ENCODE measurements at regions of chr2 and their contacts with region 1.

Region 1: DNA sequence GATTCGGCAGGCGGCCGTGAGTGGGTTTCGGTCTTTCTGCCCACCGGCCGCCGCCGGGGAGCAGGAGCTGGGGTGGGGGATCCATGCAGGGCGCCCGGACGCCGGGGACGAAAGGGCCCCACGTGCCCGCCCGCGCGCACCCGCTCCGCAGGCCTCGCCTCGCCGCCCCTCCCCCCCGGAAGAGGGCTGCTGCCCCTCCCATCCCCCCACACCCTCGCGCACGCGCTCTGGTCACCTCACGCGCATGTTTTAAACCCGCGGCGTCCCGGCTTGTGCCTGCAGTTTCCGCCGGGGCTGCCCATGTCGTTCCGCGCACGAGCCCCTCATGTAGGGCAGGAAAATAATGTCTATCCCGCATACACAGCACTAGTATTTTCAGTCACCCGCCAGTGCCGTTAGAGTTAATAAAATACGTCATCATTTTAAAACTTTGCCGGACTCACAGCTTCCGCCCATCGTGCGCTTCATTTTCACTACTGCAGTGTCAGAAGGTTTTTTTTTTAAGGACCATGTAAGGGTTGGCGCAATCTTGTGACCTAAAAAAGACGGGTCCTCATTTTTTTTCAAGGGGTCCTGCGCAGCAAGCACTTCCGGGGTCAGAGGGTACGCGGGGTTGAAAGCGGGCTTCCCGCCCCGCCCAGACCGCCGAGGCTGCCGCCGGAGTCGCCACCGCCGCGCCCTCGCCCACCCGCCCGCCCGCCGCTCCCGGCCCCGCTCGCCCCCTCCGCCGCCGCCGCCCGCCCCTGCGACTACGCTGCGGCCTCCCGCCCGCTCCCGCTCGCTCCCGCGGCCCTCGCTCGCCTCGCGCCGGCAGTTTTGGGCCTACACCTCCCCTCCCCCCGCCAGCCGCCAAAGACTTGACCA is at the start of gene PCBP1:
- DNase-seq: peak; percentile 98
- H3K4me3 Mint-ChIP-seq: peak within 1 kb of the TSS; percentile 96
- H3K27ac Mint-ChIP-seq: peak within 1 kb of the TSS; percentile 100
- H3K4me1 Mint-ChIP-seq: peaks cover 56% of the 10 kb centered on the region
- H3K27me3 Mint-ChIP-seq: no peaks in the 10 kb centered on the region
- total RNA-seq, gene PCBP1: 443 and 447 TPM in 2 replicates

Region 2: DNA sequence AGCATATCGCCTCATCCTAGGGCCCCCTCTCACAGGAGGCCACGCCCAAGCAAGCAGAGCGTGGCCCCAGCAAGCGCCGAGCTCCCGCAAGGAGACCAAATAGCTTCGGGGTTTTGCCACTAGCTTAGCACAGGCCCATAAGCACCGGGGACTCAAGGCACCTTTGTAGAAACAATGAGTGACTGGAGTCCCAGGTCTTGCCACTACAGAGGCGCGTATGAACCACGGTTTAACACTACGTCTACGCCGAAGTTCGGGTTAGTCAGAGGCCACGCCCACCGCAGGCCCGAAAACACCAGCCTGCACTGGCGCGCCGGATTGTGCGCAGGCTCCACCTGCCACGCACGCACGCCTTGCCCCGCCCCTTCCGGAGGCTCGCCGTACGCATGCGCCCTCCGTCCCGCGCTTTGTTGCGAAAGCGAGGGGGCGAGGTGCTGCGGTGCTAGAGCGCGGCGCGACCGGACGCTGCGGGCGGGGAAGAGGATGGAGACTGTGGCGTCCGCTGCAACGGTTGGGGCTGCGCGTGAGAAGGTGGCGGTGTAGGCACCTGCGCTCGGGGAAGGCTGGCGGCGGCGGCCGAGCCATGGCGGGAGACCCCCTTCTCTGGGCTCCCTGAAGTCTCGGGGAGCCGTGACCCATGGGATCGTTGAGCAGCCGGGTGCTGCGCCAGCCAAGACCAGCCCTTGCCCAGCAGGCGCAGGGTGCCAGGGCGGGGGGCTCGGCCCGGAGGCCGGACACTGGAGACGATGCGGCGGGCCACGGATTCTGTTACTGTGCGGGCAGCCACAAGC is 257.6 kb before region 1 on chr2 and contains the start of gene GMCL1:
- intact Hi-C with region 1: loop called (anchors 5 kb)
- DNase-seq: peak; percentile 100
- H3K4me3 Mint-ChIP-seq: peak within 1 kb of the TSS; percentile 95
- H3K27ac Mint-ChIP-seq: peak within 1 kb of the TSS; percentile 97
- H3K4me1 Mint-ChIP-seq: peaks cover 43% of the 10 kb centered on the region
- H3K27me3 Mint-ChIP-seq: no peaks in the 10 kb centered on the region
- total RNA-seq, gene GMCL1: 25.9 and 28.0 TPM in 2 replicates

Region 3: DNA sequence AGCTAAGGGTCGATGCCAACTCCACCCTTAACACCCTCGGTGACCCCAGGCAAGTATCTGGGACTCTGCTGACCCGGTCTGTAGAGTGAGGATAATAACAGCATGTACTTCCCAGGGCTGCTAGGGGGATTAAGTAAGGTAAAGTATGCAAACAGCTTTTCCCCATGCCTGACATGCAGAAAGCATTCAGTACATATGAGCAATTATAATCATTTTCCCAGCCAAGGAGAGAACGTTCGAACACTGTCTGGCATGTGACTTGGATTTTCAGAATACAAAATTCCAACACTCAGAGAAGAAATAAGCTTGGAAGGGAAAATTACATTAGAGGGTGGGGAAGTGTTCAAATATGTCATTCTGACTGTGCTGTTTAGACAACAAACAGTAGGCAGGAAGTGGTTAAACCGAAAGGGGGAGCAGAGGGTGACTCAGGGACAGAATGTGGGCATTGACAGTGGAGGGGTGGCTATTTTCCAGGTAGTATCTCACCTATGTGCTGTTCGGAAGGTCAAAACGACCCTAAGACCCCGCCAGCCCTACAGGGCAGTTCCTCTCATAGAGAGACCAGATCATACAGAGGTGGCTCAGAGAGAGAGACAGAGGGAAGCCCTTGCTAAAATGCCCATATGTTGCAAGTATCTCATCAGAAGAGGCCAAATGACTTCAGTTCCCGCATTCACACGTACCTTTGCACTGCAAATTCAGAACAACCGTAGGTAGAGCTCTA is 140.6 kb before region 1 on chr2:
- intact Hi-C with region 1: loop called (anchors 5 kb)
- DNase-seq: peak; percentile 92
- H3K4me3 Mint-ChIP-seq: peak overlapping the region; percentile 56
- H3K27ac Mint-ChIP-seq: peak overlapping the region; percentile 90
- H3K4me1 Mint-ChIP-seq: peaks cover 40% of the 10 kb centered on the region
- H3K27me3 Mint-ChIP-seq: no peaks in the 10 kb centered on the region

Region 4: DNA sequence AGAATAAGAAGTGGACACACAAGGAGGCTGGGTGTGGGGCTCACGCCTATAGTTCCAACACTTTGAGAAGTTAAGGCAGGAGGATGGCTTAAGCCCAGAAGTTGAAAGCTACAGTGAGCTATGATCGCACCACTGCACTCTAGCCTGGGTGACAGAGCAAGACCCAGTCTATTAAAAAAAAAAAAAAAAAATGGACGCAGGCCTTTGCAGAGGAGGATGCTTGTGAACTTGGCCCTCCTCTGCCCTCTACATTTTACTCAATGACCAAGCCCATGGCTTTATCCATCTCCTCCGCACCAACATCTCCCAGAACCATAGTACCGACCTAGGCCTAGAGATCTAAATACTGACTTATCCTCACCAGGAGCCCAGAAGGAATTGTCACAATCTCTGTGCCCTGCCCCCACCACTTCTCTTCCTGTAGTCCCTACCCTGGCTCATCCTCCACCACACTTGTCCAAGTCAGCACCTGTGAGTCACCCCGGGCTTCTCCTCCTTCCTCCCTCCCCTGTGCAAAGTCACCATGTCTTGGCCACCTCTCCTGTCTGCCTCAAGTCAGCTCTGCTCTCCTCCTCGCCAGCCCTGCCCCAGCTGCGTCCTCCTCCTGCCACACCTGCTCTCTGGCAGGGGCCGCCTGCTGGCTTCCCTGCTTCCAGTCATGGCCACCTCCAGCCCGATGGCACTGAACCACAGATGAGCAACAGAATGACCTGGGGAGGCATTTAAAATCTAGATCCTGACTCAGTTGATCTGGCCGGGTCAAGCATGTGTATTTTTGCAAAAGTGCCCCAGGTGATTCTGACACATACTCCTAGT is 89.8 kb before region 1 on chr2:
- intact Hi-C with region 1: no loop called
- DNase-seq: no peak
- H3K4me3 Mint-ChIP-seq: no peak overlapping the region
- H3K27ac Mint-ChIP-seq: peak overlapping the region; percentile 4
- H3K4me1 Mint-ChIP-seq: peaks cover 21% of the 10 kb centered on the region
- H3K27me3 Mint-ChIP-seq: no peaks in the 10 kb centered on the region

Region 5: GRCh38 chr2:70104231-70105111 is 17.4 kb after region 1 on chr2:
- intact Hi-C with region 1: loop called (anchors 2 kb)
- DNase-seq: peak; percentile 80
- H3K4me3 Mint-ChIP-seq: peak overlapping the region; percentile 72
- H3K27ac Mint-ChIP-seq: peak overlapping the region; percentile 89
- H3K4me1 Mint-ChIP-seq: peaks cover 48% of the 10 kb centered on the region
- H3K27me3 Mint-ChIP-seq: no peaks in the 10 kb centered on the region

Region 6: GRCh38 chr2:70132244-70133126 is 45.4 kb after region 1 on chr2:
- intact Hi-C with region 1: loop called (anchors 1 kb)
- DNase-seq: peak; percentile 84
- H3K4me3 Mint-ChIP-seq: peak overlapping the region; percentile 91
- H3K27ac Mint-ChIP-seq: peak overlapping the region; percentile 99
- H3K4me1 Mint-ChIP-seq: peaks cover 72% of the 10 kb centered on the region
- H3K27me3 Mint-ChIP-seq: no peaks in the 10 kb centered on the region

Region 7: GRCh38 chr2:70142590-70143313 is 55.7 kb after region 1 on chr2:
- intact Hi-C with region 1: loop called (anchors 1 kb)
- DNase-seq: peak; percentile 100
- H3K4me3 Mint-ChIP-seq: peak overlapping the region; percentile 87
- H3K27ac Mint-ChIP-seq: peak overlapping the region; percentile 98
- H3K4me1 Mint-ChIP-seq: peaks cover 59% of the 10 kb centered on the region
- H3K27me3 Mint-ChIP-seq: no peaks in the 10 kb centered on the region

Region 8: GRCh38 chr2:70248181-70248847 is 161.2 kb after region 1 on chr2 and contains the start of gene TIA1:
- intact Hi-C with region 1: loop called (anchors 2 kb)
- DNase-seq: peak; percentile 99
- H3K4me3 Mint-ChIP-seq: peak within 1 kb of the TSS; percentile 96
- H3K27ac Mint-ChIP-seq: peak within 1 kb of the TSS; percentile 99
- H3K4me1 Mint-ChIP-seq: peaks cover 26% of the 10 kb centered on the region
- H3K27me3 Mint-ChIP-seq: peaks cover 3% of the 10 kb centered on the region
- total RNA-seq, gene TIA1: 104 and 105 TPM in 2 replicates

Measured in activated CD4-positive, alpha-beta T cell treated with anti-CD3 and anti-CD28 coated beads, Interleukin-2, amount 10 ng/mL, durations not matched to agents 24 days and 14 days (primary cell).